Cardiac septum (tissue), 1 donor: ENCODE measurements at regions of chr5 and their contacts with region 1.

Region 1: GRCh38 chr5:77086689-77087483 is at the start of gene ZBED3:
- DNase-seq: peak; percentile 76
- total RNA-seq, gene ZBED3: 6.4 TPM

Region 2: DNA sequence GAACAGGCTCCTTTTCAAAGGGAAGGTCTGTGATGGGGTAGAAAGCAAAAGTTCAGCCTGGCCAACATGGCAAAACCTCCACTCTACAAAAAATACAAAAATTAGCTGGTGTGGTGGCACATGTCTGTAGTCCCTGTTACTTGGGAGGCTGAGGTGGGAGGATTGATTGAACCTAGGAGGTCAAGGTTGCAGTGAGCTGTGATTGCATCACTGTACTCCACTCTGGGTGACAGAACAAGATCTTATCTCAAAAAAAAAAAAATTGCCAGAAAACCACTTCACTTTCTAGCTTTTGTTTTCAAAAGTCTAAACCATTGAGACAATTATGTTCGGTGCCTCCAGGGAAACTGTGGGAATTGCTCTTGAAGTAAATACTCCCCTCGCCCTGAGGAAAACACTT is 193.6 kb before region 1 on chr5:
- intact Hi-C with region 1: no loop called
- DNase-seq: no peak

Region 3: DNA sequence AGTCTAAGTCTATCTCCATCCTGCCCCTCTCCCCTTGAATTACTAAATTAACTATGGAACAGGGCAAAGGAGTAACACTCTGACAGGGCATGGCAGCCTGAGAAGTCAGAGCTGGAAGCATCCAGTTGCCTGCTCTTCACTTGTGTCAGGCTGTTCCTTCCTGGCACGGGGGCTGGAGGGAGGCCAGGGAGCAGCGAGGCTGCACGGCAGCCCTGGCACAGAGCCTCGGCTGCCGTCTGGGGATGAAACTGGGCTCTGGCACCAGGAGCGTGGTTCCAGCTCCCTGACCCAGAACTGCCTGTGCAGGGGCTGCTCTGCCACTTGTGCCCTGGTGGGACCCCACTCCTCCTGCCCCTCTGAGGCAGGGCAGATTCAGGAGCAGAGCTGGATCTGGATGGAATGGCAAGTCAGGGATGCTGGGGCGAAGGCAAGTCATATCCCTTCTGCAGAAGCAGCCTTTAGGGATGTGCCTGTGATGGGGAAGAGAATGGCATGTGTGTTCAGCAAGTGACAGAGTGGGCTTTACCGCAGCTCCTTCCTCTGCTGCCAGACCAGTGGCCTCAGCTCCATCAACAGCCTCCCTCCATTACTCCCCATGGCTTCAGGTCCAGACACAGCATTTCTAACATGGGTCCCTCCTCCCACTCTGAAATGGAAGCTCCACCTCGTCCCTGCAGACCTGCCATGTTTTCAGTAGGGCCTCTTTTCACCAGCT is 81.4 kb after region 1 on chr5:
- intact Hi-C with region 1: loop called (anchors 5 kb)
- DNase-seq: peak; percentile 85

Region 4: GRCh38 chr5:77491783-77492652 is 405.1 kb after region 1 on chr5 and contains the start of gene WDR41:
- intact Hi-C with region 1: loop called (anchors 5 kb)
- DNase-seq: peak; percentile 96
- total RNA-seq, gene WDR41: 35.1 TPM

Region 5: DNA sequence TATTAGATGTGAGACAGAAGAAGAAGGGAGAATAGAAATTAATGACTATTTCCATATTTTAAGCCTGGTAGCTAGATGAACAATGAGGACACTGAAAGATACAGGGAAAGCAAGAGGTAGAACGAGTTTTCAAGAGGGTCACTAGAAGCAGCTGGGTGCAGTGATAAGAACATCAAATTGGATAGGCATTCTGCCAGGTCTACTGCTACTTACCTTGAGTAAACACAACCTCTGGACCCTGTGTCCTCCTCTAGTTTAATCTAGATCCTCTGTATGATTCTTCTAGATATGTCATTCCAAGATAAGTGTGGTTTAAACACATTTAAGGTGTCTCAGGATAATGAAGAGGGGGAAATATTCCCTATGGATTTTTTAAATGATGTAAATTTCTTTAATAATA is 520.4 kb after region 1 on chr5:
- intact Hi-C with region 1: no loop called
- DNase-seq: no peak